ENCODE measurements at regions of chr9 and their contacts with region 1.

Region 1: GRCh38 chr9:124126571-124127289 is 115.2 kb downstream of the LHX2 start:
- DNase-seq: peak; percentile 43
- ATAC-seq: peak; percentile 85
- H3K4me3 ChIP-seq: no peak overlapping the region
- H3K27ac ChIP-seq: no peak overlapping the region
- H3K4me1 ChIP-seq: peaks cover 8% of the 10 kb centered on the region; the same call in 1 of the 2 replicates
- H3K27me3 ChIP-seq: no peaks in the 10 kb centered on the region
- CTCF ChIP-seq: peak; percentile 94 to 97 (median 95)
- EP300 ChIP-seq: no peak
- POLR2A ChIP-seq: no peak
- RAD21 ChIP-seq: peak; percentile 98

Region 2: GRCh38 chr9:124197177-124198095 is 70.7 kb after region 1 on chr9:
- CTCF ChIA-PET with region 1: interaction called, 41 read pairs
- POLR2A ChIA-PET with region 1: interaction called, 3 read pairs
- RAD21 ChIA-PET with region 1: interaction called, 18 read pairs
- SMC1A ChIA-PET with region 1: interaction called, 25 read pairs
- in situ Hi-C with region 1: no loop called
- intact Hi-C with region 1: no loop called
- DNase-seq: peak; percentile 95
- ATAC-seq: peak; percentile 75
- H3K4me3 ChIP-seq: peak overlapping the region; percentile 22; the same call in 1 of the 2 replicates
- H3K27ac ChIP-seq: peak overlapping the region; percentile 99
- H3K4me1 ChIP-seq: peaks cover 58% of the 10 kb centered on the region
- H3K27me3 ChIP-seq: no peaks in the 10 kb centered on the region
- CTCF ChIP-seq: peak in 2 of 3 experiments; percentile 1 to 17; a peak in 2 of 6 replicates
- EP300 ChIP-seq: peak; percentile 84 to 92
- POLR2A ChIP-seq: peak; percentile 76
- RAD21 ChIP-seq: peak; percentile 34

Region 3: DNA sequence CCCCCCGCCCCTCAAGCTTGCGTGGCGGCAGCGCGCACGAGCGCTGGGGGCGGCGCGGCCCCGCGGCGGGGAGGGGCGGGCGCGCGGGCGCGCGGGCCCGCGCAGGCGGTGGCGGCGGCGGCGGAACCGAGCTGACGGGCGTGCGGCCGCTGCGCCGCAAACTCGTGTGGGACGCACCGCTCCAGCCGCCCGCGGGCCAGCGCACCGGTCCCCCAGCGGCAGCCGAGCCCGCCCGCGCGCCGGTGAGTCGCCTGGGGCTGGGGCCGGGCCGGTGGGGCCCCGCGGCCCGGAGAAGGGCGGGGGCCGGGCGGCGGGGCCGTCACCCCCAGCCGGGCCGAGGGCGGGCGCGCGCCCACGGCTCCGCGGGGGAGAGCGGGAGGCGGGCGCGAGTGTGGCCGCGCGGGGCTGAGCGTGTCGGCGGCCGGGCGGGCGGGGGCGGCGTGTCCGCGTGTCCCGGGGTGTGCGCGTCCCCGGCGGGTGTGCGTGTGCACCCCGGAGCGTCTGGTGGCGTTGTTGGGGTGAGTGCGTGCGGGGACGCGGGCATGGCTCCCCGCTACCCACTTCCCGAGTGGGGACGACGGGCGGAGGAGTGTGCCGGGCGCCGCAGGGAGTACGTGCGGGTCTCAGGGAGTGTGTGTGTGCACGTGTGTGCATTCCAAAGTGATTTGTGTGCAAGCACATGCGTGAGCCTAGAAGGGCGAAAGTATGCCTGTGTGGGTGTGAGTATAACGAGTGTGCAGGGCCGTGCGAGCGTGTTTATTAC is 131.3 kb after region 1 on chr9 and contains the start of gene NEK6:
- CTCF ChIA-PET with region 1: interaction called, 18 read pairs
- POLR2A ChIA-PET with region 1: interaction called, 3 read pairs
- RAD21 ChIA-PET with region 1: interaction called, 5 read pairs
- SMC1A ChIA-PET with region 1: interaction called, 8 read pairs
- in situ Hi-C with region 1: no loop called
- intact Hi-C with region 1: loop called (anchors 2 kb)
- DNase-seq: no peak
- ATAC-seq: peak; percentile 2
- H3K4me3 ChIP-seq: peak within 1 kb of the TSS; percentile 95
- H3K27ac ChIP-seq: peak within 1 kb of the TSS; percentile 88
- H3K4me1 ChIP-seq: peaks cover 35% of the 10 kb centered on the region
- H3K27me3 ChIP-seq: no peaks in the 10 kb centered on the region
- CTCF ChIP-seq: no peak
- EP300 ChIP-seq: no peak
- POLR2A ChIP-seq: peak; percentile 72
- RAD21 ChIP-seq: no peak
- polyA plus RNA-seq, gene NEK6: 31.3 to 33.2 TPM

Region 4: GRCh38 chr9:124291801-124292396 is 165.2 kb after region 1 on chr9:
- CTCF ChIA-PET with region 1: interaction called, 42 read pairs
- POLR2A ChIA-PET with region 1: interaction called, 5 read pairs
- RAD21 ChIA-PET with region 1: interaction called, 24 read pairs
- SMC1A ChIA-PET with region 1: interaction called, 18 read pairs
- in situ Hi-C with region 1: loop called (anchors 25 kb)
- intact Hi-C with region 1: loop called (anchors 2 kb)
- DNase-seq: peak; percentile 77
- ATAC-seq: peak; percentile 67
- H3K4me3 ChIP-seq: peak overlapping the region; percentile 56
- H3K27ac ChIP-seq: peak overlapping the region; percentile 91
- H3K4me1 ChIP-seq: peaks cover 90% of the 10 kb centered on the region
- H3K27me3 ChIP-seq: no peaks in the 10 kb centered on the region
- CTCF ChIP-seq: peak; percentile 18 to 41 (median 21); a peak in 3 of 6 replicates
- EP300 ChIP-seq: peak; percentile 45 to 68; a peak in 3 of 4 replicates
- POLR2A ChIP-seq: peak; percentile 45
- RAD21 ChIP-seq: no peak

Region 5: GRCh38 chr9:124320062-124320973 is 193.6 kb after region 1 on chr9:
- CTCF ChIA-PET with region 1: interaction called, 17 read pairs
- POLR2A ChIA-PET with region 1: no interaction called
- RAD21 ChIA-PET with region 1: interaction called, 14 read pairs
- SMC1A ChIA-PET with region 1: interaction called, 8 read pairs
- in situ Hi-C with region 1: no loop called
- intact Hi-C with region 1: loop called (anchors 2 kb)
- DNase-seq: no peak
- ATAC-seq: peak; percentile 71
- H3K4me3 ChIP-seq: no peak overlapping the region
- H3K27ac ChIP-seq: no peak overlapping the region
- H3K4me1 ChIP-seq: peaks cover 8% of the 10 kb centered on the region
- H3K27me3 ChIP-seq: no peaks in the 10 kb centered on the region
- CTCF ChIP-seq: peak; percentile 65 to 85 (median 80)
- EP300 ChIP-seq: no peak
- POLR2A ChIP-seq: no peak
- RAD21 ChIP-seq: peak; percentile 48

Region 6: DNA sequence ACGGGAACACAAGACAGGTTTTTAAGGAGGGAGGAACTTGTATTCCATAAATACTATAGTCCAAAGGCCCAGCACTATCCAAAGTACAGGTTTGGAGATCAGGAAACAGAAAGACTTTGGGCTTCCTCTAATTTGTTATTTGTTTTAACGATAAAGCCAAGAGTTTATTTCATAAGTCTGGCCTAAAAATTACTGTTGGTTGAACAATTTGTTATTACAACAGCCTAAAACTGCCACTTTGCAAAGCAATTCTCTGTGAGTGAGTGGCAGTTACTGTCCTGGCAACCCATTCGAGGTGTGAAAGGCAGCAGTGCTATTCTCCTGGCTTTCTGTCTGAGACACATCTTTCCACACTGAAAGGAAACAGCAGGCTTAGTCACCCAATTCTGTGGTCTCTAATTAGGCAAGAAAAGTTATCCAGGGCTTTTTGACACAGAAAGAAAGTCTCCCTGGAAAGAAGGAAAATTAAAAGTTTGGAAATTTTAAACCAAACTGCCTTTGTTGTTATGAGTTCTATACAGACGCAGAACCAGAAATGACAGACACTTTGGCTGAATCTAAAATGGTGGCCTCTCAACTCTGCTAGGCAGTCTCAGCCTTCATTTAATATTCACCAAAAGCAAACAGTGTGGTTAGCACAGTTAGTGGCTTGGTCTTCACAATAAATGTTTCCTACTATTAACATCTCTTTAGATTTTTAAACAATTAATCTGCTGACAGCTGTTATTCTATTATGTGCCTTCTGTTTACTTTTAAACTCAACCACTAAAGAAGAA is 254.6 kb after region 1 on chr9:
- CTCF ChIA-PET with region 1: interaction called, 33 read pairs
- POLR2A ChIA-PET with region 1: interaction called, 3 read pairs
- RAD21 ChIA-PET with region 1: interaction called, 18 read pairs
- SMC1A ChIA-PET with region 1: interaction called, 12 read pairs
- in situ Hi-C with region 1: no loop called
- intact Hi-C with region 1: loop called (anchors 10 kb)
- DNase-seq: no peak
- ATAC-seq: no peak
- H3K4me3 ChIP-seq: no peak overlapping the region
- H3K27ac ChIP-seq: no peak overlapping the region
- H3K4me1 ChIP-seq: no peaks in the 10 kb centered on the region
- H3K27me3 ChIP-seq: no peaks in the 10 kb centered on the region
- CTCF ChIP-seq: no peak
- EP300 ChIP-seq: no peak
- POLR2A ChIP-seq: no peak
- RAD21 ChIP-seq: no peak

Region 7: GRCh38 chr9:124537926-124538325 is 411.2 kb after region 1 on chr9:
- CTCF ChIA-PET with region 1: interaction called, 23 read pairs
- POLR2A ChIA-PET with region 1: no interaction called
- RAD21 ChIA-PET with region 1: interaction called, 7 read pairs
- SMC1A ChIA-PET with region 1: interaction called, 4 read pairs
- in situ Hi-C with region 1: no loop called
- intact Hi-C with region 1: no loop called
- DNase-seq: no peak
- ATAC-seq: no peak
- H3K4me3 ChIP-seq: no peak overlapping the region
- H3K27ac ChIP-seq: no peak overlapping the region
- H3K4me1 ChIP-seq: no peaks in the 10 kb centered on the region
- H3K27me3 ChIP-seq: no peaks in the 10 kb centered on the region
- CTCF ChIP-seq: no peak
- EP300 ChIP-seq: no peak
- POLR2A ChIP-seq: no peak
- RAD21 ChIP-seq: no peak

Measured in GM12878 (cell line).